ENCODE measurements at regions of chr17 and their contacts with region 1.

Region 1: GRCh38 chr17:60315650-60316049 is 76.3 kb downstream of the USP32 start:
- DNase-seq: no peak
- ATAC-seq: no peak
- H3K4me3 ChIP-seq: no peak overlapping the region
- H3K27ac ChIP-seq: 0 out of 2 replicates have a peak overlapping the region, but pooled peaks have one; percentile 24
- H3K4me1 ChIP-seq: peaks cover 11% of the 10 kb centered on the region; the same call in 1 of the 2 replicates
- H3K27me3 ChIP-seq: no peaks in the 10 kb centered on the region
- CTCF ChIP-seq: 0 out of 6 replicates have a peak, but pooled peaks of 1 of the 3 experiments have one; percentile 6
- EP300 ChIP-seq: no peak
- POLR2A ChIP-seq: no peak
- RAD21 ChIP-seq: no peak

Region 2: DNA sequence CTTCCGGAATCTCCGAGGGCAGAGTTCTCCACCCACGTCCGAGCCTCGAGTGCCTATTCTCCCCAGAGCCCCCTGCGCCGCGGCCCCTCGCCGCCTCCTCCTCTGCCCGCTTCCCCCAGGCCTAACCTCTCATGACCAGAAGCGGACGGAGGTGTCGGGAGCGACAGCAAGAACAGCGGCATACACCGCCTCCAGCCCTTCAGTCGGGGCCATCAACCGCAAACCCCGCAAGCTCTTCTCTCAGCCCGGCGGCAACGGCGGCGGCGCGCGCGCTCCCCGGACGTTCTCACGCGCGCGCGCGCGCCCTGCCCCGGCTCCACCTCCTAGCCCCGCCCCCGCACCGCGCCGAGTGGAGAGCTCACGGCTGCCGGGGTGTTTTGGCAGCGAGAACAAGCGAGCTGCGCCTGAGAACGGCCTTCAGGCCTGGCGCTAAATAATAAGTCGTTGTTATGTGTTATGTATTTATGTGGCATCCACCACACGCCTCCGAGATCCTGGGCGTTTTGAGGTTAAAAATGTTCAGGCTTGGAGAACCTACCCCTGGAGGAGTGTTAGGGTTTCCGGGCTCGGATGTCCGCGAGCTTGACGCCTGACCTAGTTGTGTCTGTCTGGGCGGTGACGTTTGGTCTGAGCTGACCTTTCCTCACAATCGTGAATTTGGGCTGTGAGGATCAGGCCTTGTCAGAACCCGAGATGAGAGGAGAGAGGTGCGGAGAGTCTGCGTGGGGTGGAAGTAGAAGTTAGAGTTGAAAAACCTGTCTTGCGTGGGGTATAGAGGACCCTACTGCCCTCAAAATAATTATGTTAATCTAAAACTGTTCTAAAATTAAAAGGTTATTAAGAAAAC is 350.9 kb before region 1 on chr17 and contains the start of gene RNFT1:
- CTCF ChIA-PET with region 1: no interaction called
- POLR2A ChIA-PET with region 1: interaction called, 11 read pairs
- RAD21 ChIA-PET with region 1: no interaction called
- SMC1A ChIA-PET with region 1: no interaction called
- in situ Hi-C with region 1: no loop called
- intact Hi-C with region 1: no loop called
- DNase-seq: peak; percentile 33
- ATAC-seq: peak; percentile 94
- H3K4me3 ChIP-seq: peak within 1 kb of the TSS; percentile 74
- H3K27ac ChIP-seq: peak within 1 kb of the TSS; percentile 67
- H3K4me1 ChIP-seq: peaks cover 5% of the 10 kb centered on the region; the same call in 1 of the 2 replicates
- H3K27me3 ChIP-seq: no peaks in the 10 kb centered on the region
- CTCF ChIP-seq: no peak
- EP300 ChIP-seq: no peak
- POLR2A ChIP-seq: peak; percentile 79
- RAD21 ChIP-seq: no peak
- polyA plus RNA-seq, gene RNFT1: 13.6 to 16.9 TPM

Region 3: DNA sequence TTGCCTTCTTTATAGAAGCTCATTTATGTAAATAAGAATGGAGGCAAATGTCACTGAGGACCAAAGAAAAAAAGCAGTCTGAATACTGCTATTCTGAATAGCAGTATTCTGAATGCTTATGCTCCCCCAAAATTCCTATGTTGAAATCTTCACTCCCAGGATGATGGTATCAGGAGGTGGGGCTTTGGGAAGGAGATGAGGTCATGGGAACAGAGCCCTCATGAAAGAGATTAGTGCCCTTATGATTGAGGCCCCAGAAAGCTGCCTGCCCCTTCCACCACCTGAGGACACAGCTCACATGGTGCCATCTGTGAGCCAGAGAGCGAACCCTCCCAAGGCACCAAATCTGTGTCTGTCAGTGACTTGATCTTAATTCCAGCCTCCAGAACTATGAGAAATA is 265.7 kb before region 1 on chr17:
- CTCF ChIA-PET with region 1: no interaction called
- POLR2A ChIA-PET with region 1: no interaction called
- RAD21 ChIA-PET with region 1: no interaction called
- SMC1A ChIA-PET with region 1: no interaction called
- in situ Hi-C with region 1: no loop called
- intact Hi-C with region 1: no loop called
- DNase-seq: no peak
- ATAC-seq: no peak
- H3K4me3 ChIP-seq: no peak overlapping the region
- H3K27ac ChIP-seq: no peak overlapping the region
- H3K4me1 ChIP-seq: no peaks in the 10 kb centered on the region
- H3K27me3 ChIP-seq: no peaks in the 10 kb centered on the region
- CTCF ChIP-seq: no peak
- EP300 ChIP-seq: no peak
- POLR2A ChIP-seq: no peak
- RAD21 ChIP-seq: no peak

Region 4: DNA sequence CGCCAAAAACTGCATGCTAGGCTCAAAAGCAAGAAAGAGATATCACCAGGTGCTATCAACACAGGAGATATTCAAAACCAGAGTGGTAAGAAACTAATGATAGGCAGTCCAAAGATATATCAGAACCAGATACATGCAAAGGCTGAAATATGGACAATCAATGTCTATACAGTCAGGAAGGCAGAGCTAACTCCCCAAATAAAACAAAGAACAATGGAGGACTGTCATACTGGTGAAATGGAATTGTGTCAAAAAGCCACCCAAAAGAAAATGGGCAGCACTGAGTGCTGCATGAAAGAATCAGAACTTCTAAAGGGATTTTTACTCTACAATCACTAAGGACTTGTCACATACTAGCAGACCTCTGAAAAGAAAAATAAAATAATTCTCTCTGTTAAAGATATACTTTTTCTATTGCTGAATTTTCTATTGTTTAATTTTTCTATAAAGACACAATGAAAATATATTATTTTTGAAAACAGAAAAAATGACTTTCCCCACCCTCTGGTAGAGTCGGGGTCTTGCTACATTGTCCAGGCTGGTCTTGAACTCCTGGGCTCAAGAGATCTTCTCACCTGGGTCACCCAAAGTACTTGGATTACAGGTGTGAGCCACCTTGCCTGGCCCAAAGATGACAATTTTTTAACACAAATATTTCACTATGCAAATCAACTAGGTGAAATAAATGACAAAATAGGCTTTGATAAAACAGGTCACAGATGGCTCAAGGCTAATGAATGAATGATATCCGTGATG is 21.9 kb before region 1 on chr17:
- CTCF ChIA-PET with region 1: interaction called, 7 read pairs
- POLR2A ChIA-PET with region 1: no interaction called
- RAD21 ChIA-PET with region 1: no interaction called
- SMC1A ChIA-PET with region 1: interaction called, 10 read pairs
- in situ Hi-C with region 1: no loop called
- intact Hi-C with region 1: no loop called
- DNase-seq: no peak
- ATAC-seq: no peak
- H3K4me3 ChIP-seq: no peak overlapping the region
- H3K27ac ChIP-seq: no peak overlapping the region
- H3K4me1 ChIP-seq: no peaks in the 10 kb centered on the region
- H3K27me3 ChIP-seq: no peaks in the 10 kb centered on the region
- CTCF ChIP-seq: no peak
- EP300 ChIP-seq: no peak
- POLR2A ChIP-seq: no peak
- RAD21 ChIP-seq: no peak

Region 5: DNA sequence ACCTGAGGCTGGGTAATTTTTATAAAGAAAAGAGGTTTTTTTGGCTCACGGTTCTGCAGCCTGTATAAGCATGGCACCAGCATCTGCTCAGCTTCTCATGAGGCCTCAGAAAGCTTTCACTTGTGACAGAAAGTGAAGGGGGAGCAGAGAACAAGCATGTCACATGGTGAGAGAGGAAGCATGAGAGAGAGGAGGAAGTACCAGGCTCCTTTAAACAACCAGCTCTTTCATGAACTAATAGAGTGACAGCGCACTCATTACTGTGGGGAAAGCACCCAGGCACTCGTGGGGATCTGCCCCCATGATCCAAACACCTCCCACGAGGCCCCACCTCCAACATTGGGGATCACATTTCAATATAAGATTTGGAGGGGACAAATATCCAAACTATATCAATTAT is 10.5 kb before region 1 on chr17:
- CTCF ChIA-PET with region 1: interaction called, 5 read pairs
- POLR2A ChIA-PET with region 1: interaction called, 6 read pairs
- RAD21 ChIA-PET with region 1: interaction called, 7 read pairs
- SMC1A ChIA-PET with region 1: interaction called, 10 read pairs
- in situ Hi-C with region 1: no loop called
- intact Hi-C with region 1: no loop called
- DNase-seq: peak; percentile 59
- ATAC-seq: peak; percentile 99
- H3K4me3 ChIP-seq: no peak overlapping the region
- H3K27ac ChIP-seq: peak overlapping the region; percentile 3
- H3K4me1 ChIP-seq: peaks cover 6% of the 10 kb centered on the region; the same call in 1 of the 2 replicates
- H3K27me3 ChIP-seq: no peaks in the 10 kb centered on the region
- CTCF ChIP-seq: no peak
- EP300 ChIP-seq: no peak
- POLR2A ChIP-seq: no peak
- RAD21 ChIP-seq: no peak

Region 6: GRCh38 chr17:60392042-60392844 is 76.6 kb after region 1 on chr17 and contains the start of gene USP32:
- CTCF ChIA-PET with region 1: no interaction called
- POLR2A ChIA-PET with region 1: interaction called, 10 read pairs
- RAD21 ChIA-PET with region 1: interaction called, 3 read pairs
- SMC1A ChIA-PET with region 1: interaction called, 6 read pairs
- in situ Hi-C with region 1: no loop called
- intact Hi-C with region 1: no loop called
- DNase-seq: peak; percentile 96
- ATAC-seq: peak; percentile 88
- H3K4me3 ChIP-seq: peak within 1 kb of the TSS; percentile 97
- H3K27ac ChIP-seq: peak within 1 kb of the TSS; percentile 89
- H3K4me1 ChIP-seq: no peaks in the 10 kb centered on the region
- H3K27me3 ChIP-seq: no peaks in the 10 kb centered on the region
- CTCF ChIP-seq: peak in 2 of 3 experiments; percentile 15 to 16; a peak in 1 of 6 replicates
- EP300 ChIP-seq: peak in 1 of 2 experiments; percentile 36; a peak in 1 of 4 replicates
- POLR2A ChIP-seq: peak; percentile 87
- RAD21 ChIP-seq: no peak
- polyA plus RNA-seq, gene USP32: 7.8 to 9.8 TPM